Prostate gland (tissue), 2 donors: ENCODE measurements at regions of chr9 and their contacts with region 1.

Region 1: GRCh38 chr9:87497604-87498045 is at the start of gene DAPK1:
- DNase-seq: peak; percentile 31
- H3K4me3 ChIP-seq: peak within 1 kb of the TSS; percentile 61 to 65
- H3K27ac ChIP-seq: peak within 1 kb of the TSS; percentile 46 to 50
- H3K4me1 ChIP-seq: peaks cover 3% of the 10 kb centered on the region
- H3K27me3 ChIP-seq: no peaks in the 10 kb centered on the region
- CTCF ChIP-seq: peak in 1 of 4 experiments; percentile 6
- POLR2A ChIP-seq: peak; percentile 40
- total RNA-seq, gene DAPK1: 13.9 to 39.1 TPM

Region 2: GRCh38 chr9:87157366-87158031 is 340.1 kb before region 1 on chr9:
- intact Hi-C with region 1: no loop called
- DNase-seq: peak; percentile 29
- H3K4me3 ChIP-seq: no peak overlapping the region
- H3K27ac ChIP-seq: no peak overlapping the region
- H3K4me1 ChIP-seq: no peaks in the 10 kb centered on the region
- H3K27me3 ChIP-seq: no peaks in the 10 kb centered on the region
- CTCF ChIP-seq: no peak
- POLR2A ChIP-seq: no peak

Region 3: DNA sequence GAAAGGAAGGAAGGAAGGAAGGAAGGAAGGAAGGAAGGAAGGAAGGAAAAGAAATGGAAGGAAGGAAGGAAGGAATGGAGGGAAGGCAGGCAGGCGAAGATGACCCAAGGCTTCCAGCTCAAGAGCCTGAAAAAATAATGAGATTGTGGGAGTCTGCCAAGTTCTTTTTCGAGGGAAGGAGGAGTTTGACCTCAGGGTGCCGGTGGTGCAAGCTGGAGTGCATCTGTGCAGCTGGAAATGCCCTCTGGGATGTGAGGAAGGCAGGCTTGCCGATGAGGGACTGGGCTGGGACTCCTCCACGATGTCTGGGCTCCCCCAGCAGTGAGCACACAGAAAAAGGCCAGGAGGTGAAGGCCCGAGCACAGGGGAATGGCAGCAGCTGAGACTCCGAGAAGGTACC is 154.9 kb before region 1 on chr9:
- intact Hi-C with region 1: loop called (anchors 5 kb)
- DNase-seq: no peak
- H3K4me3 ChIP-seq: no peak overlapping the region
- H3K27ac ChIP-seq: no peak overlapping the region
- H3K4me1 ChIP-seq: no peaks in the 10 kb centered on the region
- H3K27me3 ChIP-seq: no peaks in the 10 kb centered on the region
- CTCF ChIP-seq: no peak
- POLR2A ChIP-seq: no peak

Region 4: GRCh38 chr9:87557996-87558395 is 60.4 kb after region 1 on chr9:
- intact Hi-C with region 1: no loop called
- DNase-seq: no peak
- H3K4me3 ChIP-seq: no peak overlapping the region
- H3K27ac ChIP-seq: no peak overlapping the region
- H3K4me1 ChIP-seq: no peaks in the 10 kb centered on the region
- H3K27me3 ChIP-seq: no peaks in the 10 kb centered on the region
- CTCF ChIP-seq: no peak
- POLR2A ChIP-seq: no peak

Region 5: DNA sequence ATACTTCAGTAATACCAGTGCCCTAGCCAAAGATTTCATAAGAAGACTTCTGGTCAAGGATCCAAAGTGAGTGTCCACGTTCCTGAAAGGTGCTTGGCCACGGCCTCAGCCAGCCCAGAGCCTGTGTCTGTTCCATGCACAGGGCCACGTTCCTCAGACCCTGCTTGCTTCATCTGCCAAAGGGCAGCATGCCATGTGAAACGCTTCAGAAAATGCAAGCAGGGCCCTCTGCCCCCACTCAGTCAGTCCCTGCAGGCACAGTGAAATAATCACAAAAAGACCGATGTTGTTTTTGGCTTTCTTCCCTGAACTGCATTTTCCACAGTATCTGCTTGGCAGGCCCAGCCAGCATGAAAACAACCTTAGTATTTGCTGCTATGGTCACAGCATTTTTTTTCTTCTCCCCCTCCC is 142.8 kb after region 1 on chr9:
- intact Hi-C with region 1: no loop called
- DNase-seq: no peak
- H3K4me3 ChIP-seq: no peak overlapping the region
- H3K27ac ChIP-seq: no peak overlapping the region
- H3K4me1 ChIP-seq: peaks cover 3% of the 10 kb centered on the region
- H3K27me3 ChIP-seq: no peaks in the 10 kb centered on the region
- CTCF ChIP-seq: no peak
- POLR2A ChIP-seq: no peak

Region 6: GRCh38 chr9:87653941-87654340 is 156.3 kb after region 1 on chr9:
- intact Hi-C with region 1: loop called (anchors 2 kb)
- DNase-seq: no peak
- H3K4me3 ChIP-seq: no peak overlapping the region
- H3K27ac ChIP-seq: no peak overlapping the region
- H3K4me1 ChIP-seq: no peaks in the 10 kb centered on the region
- H3K27me3 ChIP-seq: no peaks in the 10 kb centered on the region
- CTCF ChIP-seq: no peak
- POLR2A ChIP-seq: no peak